HAP-1 (cell line): ENCODE measurements at regions of chr3 and their contacts with region 1.

Region 1: GRCh38 chr3:137013955-137014688 is 56.3 kb downstream of the IL20RB start:
- DNase-seq: peak; percentile 76 to 92
- H3K4me3 ChIP-seq: peak overlapping the region; percentile 11; the same call in 1 of the 2 replicates
- H3K4me1 ChIP-seq: peaks cover 3% of the 10 kb centered on the region; the same call in 1 of the 2 replicates
- H3K27me3 ChIP-seq: no peaks in the 10 kb centered on the region

Region 2: GRCh38 chr3:136075218-136075808 is 938.8 kb before region 1 on chr3:
- in situ Hi-C with region 1: loop called (anchors 5 kb)
- DNase-seq: peak; percentile 77 to 79
- H3K4me3 ChIP-seq: no peak overlapping the region
- H3K4me1 ChIP-seq: 0 out of 2 replicates have a peak, but pooled peaks cover 4% of the 10 kb centered on the region
- H3K27me3 ChIP-seq: no peaks in the 10 kb centered on the region

Region 3: GRCh38 chr3:136305878-136306277 is 708.2 kb before region 1 on chr3:
- in situ Hi-C with region 1: loop called (anchors 10 kb)
- DNase-seq: peak; percentile 17 to 55
- H3K4me3 ChIP-seq: no peak overlapping the region
- H3K4me1 ChIP-seq: no peaks in the 10 kb centered on the region
- H3K27me3 ChIP-seq: no peaks in the 10 kb centered on the region

Region 4: DNA sequence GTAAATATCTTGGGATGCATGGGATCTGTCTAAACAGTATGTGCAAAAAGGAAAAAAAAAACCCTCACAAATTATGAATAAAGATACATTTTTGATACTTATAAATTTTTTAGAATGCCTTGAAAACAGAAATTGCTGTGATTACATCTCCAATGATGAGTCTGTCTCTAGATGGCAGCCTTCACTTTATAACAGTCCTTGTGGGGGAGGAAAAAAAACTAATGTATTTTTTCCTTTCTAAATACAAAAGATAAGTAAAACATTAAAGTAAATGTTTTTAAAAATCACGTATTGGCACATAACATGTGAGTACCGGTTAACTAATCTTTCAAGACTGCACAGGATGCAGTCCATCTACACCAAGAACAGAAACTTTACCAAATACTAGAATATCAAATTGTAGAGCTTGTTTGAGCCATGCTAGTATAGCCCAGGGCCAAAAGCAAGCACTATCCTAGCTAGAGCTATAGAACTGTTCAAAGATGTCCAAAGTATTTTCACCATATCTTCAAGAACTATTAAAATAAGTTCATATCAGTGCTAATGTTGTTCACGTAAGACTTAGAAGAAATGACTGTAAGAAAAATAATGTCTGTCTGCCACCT is 468.4 kb before region 1 on chr3:
- in situ Hi-C with region 1: loop called (anchors 25 kb)
- DNase-seq: no peak
- H3K4me3 ChIP-seq: no peak overlapping the region
- H3K4me1 ChIP-seq: no peaks in the 10 kb centered on the region
- H3K27me3 ChIP-seq: no peaks in the 10 kb centered on the region

Region 5: DNA sequence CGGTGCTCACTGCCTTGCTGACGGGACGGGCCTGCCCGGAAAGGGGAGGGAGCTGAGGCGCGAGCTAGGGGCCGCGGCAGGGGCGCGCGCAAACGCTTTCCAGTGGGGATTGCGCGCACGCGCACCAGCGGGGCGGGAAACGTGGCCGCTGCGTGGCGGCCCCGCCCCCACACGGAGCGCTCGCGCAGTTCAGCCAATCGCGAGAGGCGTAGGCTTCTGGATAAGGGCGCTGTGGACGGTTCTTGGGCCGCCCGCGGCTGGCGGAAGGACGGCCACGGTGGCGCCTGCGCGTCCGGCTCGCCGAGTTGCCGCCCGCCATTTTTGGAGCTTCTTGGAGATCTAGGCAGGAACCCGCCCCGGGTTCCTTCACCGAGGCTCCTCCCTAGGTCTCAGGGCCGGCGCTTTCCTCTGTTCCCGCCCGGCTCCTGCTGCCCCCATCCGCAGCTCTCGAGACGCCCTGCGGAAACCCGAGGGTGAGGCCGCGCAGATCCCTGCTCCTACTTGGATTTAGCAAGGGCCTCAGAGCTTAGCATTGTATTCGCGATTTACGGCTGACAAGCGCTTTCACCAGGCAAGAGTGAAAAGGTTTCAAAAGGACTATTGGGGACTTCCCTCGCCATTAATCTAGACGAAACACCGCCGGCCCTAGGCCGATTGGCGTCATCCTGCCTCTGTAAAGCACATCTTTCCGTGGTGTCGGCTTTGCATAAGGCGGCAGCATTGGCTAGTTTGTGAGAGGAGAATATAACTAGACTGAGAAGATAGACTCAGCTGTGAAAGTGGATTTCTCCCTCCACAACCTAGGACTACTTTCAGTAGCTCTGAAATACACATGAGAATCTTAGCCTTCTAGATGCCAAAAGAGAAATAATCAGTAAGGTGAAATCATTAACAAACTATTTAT is 261.4 kb before region 1 on chr3:
- in situ Hi-C with region 1: loop called (anchors 10 kb)
- DNase-seq: peak; percentile 96 to 99
- H3K4me3 ChIP-seq: peak overlapping the region; percentile 80
- H3K4me1 ChIP-seq: peaks cover 17% of the 10 kb centered on the region
- H3K27me3 ChIP-seq: no peaks in the 10 kb centered on the region